ENCODE measurements at regions of chr10 and their contacts with region 1.

Region 1: GRCh38 chr10:71396084-71396720 is 518 bp upstream of the CDH23 start:
- DNase-seq: peak; percentile 60 to 79
- H3K4me3 ChIP-seq: peak overlapping the region; percentile 54 to 86 (median 62)
- H3K27ac ChIP-seq: no peak overlapping the region
- H3K4me1 ChIP-seq: peaks cover 0 to 18% (median 10%) of the 10 kb centered on the region in 4 experiments; a peak in 6 of 7 replicates
- H3K27me3 ChIP-seq: peaks cover 15 to 50% (median 40%) of the 10 kb centered on the region in 4 experiments
- CTCF ChIP-seq: peak; percentile 55 to 84 (median 71)
- EP300 ChIP-seq: no peak
- POLR2A ChIP-seq: no peak
- RAD21 ChIP-seq: peak; percentile 84 to 88

Region 2: GRCh38 chr10:71150796-71151195 is 245.4 kb before region 1 on chr10:
- CTCF ChIA-PET with region 1: no interaction called
- POLR2A ChIA-PET with region 1: no interaction called
- DNase-seq: no peak
- H3K4me3 ChIP-seq: no peak overlapping the region
- H3K27ac ChIP-seq: no peak overlapping the region
- H3K4me1 ChIP-seq: no peaks in the 10 kb centered on the region
- H3K27me3 ChIP-seq: no peaks in the 10 kb centered on the region
- CTCF ChIP-seq: no peak
- EP300 ChIP-seq: no peak
- POLR2A ChIP-seq: no peak
- RAD21 ChIP-seq: no peak

Region 3: DNA sequence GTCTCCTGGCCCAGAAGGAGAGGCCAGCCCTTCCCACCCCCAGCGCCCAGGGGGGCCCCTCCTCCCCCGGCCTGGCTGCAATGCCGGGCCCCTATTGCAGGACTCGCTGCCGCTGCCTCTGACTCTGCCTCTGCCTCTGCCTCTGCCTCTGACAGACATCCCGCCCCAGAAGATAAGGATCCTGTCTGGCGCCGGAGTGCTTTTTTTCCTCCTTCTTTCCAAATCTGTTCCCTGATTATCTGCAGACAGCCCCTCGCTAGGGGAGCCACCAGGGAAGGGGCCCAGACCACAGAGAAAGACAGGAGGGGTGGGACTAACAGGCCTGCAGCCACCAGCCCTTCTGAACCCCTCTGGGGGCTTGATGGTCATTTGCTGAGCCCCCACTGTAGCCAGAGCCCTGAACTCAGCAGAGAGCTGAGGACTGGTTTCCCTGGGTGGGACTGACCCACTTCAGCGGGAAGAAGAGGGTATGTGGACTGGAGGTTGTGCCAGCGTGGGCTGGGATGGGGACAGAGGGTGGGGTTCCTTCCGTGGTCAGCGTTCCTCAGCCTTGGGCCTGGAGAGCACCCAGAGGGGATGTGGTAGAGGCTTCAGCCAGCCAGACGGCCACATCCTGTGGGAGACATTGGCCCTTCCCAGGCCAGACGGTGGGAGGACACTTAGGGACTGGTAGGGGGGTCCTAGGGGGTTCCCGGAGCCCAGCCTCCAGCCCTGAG is 161.1 kb before region 1 on chr10:
- CTCF ChIA-PET with region 1: no interaction called
- POLR2A ChIA-PET with region 1: no interaction called
- DNase-seq: no peak
- H3K4me3 ChIP-seq: no peak overlapping the region
- H3K27ac ChIP-seq: no peak overlapping the region
- H3K4me1 ChIP-seq: peaks cover 7 to 17% (median 13%) of the 10 kb centered on the region in 4 experiments
- H3K27me3 ChIP-seq: 0 out of 7 replicates have a peak, but pooled peaks cover 0 to 2% (median 0%) of the 10 kb centered on the region in 4 experiments
- CTCF ChIP-seq: no peak
- EP300 ChIP-seq: no peak
- POLR2A ChIP-seq: no peak
- RAD21 ChIP-seq: no peak

Region 4: DNA sequence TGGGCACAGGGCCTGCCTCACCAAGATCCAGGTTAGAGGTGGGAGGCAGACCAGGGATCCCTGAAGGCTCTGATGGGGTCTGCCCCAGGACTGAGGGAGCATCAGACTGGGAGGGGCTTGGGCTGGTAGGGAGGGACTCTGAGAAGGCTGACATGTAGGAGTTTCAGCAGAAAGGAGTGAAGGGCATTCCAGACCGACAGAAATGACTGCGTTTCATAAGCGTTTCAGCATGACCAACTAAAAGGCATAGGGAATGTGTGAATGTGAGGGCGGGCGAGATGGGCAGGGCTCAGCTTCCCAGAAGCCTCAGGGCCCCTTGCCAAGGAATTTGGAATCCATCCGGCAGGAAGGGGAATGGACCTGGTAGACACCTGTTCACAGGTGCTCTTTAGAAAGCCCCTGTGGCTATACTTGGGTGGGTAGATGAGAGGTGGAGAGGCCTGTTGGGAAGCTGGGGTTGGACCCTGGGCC is 102.1 kb before region 1 on chr10:
- CTCF ChIA-PET with region 1: no interaction called
- POLR2A ChIA-PET with region 1: no interaction called
- DNase-seq: no peak
- H3K4me3 ChIP-seq: no peak overlapping the region
- H3K27ac ChIP-seq: no peak overlapping the region
- H3K4me1 ChIP-seq: no peaks in the 10 kb centered on the region
- H3K27me3 ChIP-seq: no peaks in the 10 kb centered on the region
- CTCF ChIP-seq: no peak
- EP300 ChIP-seq: no peak
- POLR2A ChIP-seq: no peak
- RAD21 ChIP-seq: no peak

Region 5: GRCh38 chr10:71383972-71384687 is 12.1 kb before region 1 on chr10:
- CTCF ChIA-PET with region 1: interaction called, 74 read pairs
- POLR2A ChIA-PET with region 1: interaction called, 3 read pairs
- DNase-seq: peak; percentile 58 to 99
- H3K4me3 ChIP-seq: no peak overlapping the region
- H3K27ac ChIP-seq: no peak overlapping the region
- H3K4me1 ChIP-seq: no peaks in the 10 kb centered on the region
- H3K27me3 ChIP-seq: no peaks in the 10 kb centered on the region
- CTCF ChIP-seq: peak; percentile 93 to 96 (median 95)
- EP300 ChIP-seq: no peak
- POLR2A ChIP-seq: no peak
- RAD21 ChIP-seq: peak; percentile 91 to 92

Region 6: DNA sequence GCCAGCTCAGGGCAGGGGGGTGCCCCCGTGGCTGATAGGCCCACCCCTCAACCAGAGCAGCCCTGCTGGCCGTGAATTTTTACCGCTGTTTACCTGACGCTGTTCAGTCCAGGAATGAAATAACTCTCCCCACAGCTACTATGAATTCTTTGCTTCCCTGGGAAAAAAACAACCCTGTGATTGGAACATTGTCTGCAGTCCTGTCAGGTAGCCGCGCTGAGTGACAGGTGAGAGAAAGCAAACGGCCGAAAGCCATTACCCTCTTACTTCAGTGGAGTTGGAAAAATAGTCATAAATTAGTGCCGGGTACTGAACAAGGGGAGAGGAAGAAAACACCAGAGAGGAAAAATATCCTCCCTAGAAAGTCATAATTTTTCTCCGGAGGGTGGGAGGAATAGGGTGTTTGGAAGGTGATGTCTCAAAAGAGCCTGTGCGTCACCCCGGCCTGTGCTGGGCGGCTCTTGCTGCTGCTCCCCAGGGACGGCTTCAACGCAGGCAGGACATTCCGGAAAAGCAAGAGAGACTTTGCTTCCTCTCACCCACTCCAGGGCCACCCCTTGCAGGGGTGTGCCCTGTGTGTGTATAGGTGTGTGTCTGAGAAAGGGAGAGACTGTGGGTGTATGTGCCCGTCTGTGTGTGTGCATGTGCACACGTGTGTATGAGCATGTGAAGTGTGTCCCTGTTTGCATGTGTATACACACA is 69.5 kb after region 1 on chr10:
- CTCF ChIA-PET with region 1: interaction called, 14 read pairs
- POLR2A ChIA-PET with region 1: interaction called, 4 read pairs
- DNase-seq: no peak
- H3K4me3 ChIP-seq: no peak overlapping the region
- H3K27ac ChIP-seq: no peak overlapping the region
- H3K4me1 ChIP-seq: peaks cover 0 to 2% (median 0%) of the 10 kb centered on the region in 4 experiments; a peak in 1 of 7 replicates
- H3K27me3 ChIP-seq: no peaks in the 10 kb centered on the region
- CTCF ChIP-seq: no peak
- EP300 ChIP-seq: no peak
- POLR2A ChIP-seq: no peak
- RAD21 ChIP-seq: no peak

Region 7: DNA sequence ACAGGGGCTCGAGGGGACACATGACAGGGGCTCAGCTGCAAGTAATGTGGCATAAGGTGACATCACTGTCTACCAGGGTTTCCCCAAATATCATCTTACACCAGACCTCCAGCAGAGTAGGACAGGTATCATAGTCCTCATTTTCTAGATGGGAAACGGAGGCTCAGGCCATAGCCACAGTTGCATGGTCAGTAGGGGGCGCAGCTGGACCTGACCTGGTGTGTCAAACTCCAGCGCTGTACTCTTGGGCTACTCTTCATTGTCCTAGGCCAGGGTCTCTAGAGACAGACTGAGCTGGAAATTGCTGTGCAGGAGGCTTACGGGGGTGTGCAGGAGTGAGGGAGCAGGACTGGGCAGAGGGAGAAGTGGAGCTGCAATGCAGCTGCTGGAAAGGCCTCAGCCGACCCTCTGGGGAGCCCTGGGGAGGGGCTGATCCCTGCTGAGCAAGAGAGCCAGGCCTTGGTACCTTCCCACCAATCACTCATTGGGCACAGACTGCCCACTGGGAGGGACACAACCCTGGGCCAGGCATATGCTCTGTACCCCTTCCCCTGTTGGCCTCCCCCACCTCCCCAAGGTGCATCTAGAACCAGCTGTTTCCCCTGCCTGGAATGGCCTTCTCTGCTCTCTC is 90.4 kb after region 1 on chr10:
- CTCF ChIA-PET with region 1: interaction called, 32 read pairs
- POLR2A ChIA-PET with region 1: no interaction called
- DNase-seq: peak in 1 of 2 experiments; percentile 93
- H3K4me3 ChIP-seq: no peak overlapping the region
- H3K27ac ChIP-seq: no peak overlapping the region
- H3K4me1 ChIP-seq: peaks cover 0 to 6% (median 1%) of the 10 kb centered on the region in 4 experiments; a peak in 3 of 7 replicates
- H3K27me3 ChIP-seq: no peaks in the 10 kb centered on the region
- CTCF ChIP-seq: peak; percentile 92 to 99 (median 96)
- EP300 ChIP-seq: no peak
- POLR2A ChIP-seq: no peak
- RAD21 ChIP-seq: peak; percentile 92 to 94

Measured in H1 (cell line).